Body of pancreas (tissue), 4 donors: ENCODE measurements at regions of chr10 and their contacts with region 1.

Region 1: DNA sequence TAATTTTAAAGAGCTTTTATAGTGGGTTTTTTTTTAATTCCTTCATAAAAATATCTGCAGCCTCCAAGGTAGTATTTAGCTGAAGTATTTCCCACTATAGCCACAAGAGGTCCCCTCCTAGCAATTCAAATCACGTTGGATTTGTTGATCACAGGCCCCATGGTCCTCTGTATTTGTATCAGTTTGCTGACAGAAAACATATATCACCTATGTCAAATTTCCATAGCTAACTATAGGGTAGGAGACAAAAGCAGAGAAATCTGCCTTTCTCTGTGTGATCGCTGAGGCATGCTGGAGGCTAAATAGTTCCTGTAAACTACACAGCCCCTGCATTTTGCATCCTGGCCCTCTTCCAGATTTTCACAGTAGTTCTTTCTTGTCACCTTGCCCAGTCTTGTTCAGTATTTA is 1.7 kb upstream of the CTNNA3 start:
- DNase-seq: peak in 3 of 4 donors; percentile 13 to 32 (median 17)
- ATAC-seq: peak; percentile 70
- H3K4me3 ChIP-seq: no peak overlapping the region
- H3K27ac ChIP-seq: no peak overlapping the region
- H3K4me1 ChIP-seq: peaks cover 5% of the 10 kb centered on the region
- H3K27me3 ChIP-seq: no peaks in the 10 kb centered on the region
- CTCF ChIP-seq: peak; percentile 22 to 71 (median 58)
- POLR2A ChIP-seq: no peak

Region 2: DNA sequence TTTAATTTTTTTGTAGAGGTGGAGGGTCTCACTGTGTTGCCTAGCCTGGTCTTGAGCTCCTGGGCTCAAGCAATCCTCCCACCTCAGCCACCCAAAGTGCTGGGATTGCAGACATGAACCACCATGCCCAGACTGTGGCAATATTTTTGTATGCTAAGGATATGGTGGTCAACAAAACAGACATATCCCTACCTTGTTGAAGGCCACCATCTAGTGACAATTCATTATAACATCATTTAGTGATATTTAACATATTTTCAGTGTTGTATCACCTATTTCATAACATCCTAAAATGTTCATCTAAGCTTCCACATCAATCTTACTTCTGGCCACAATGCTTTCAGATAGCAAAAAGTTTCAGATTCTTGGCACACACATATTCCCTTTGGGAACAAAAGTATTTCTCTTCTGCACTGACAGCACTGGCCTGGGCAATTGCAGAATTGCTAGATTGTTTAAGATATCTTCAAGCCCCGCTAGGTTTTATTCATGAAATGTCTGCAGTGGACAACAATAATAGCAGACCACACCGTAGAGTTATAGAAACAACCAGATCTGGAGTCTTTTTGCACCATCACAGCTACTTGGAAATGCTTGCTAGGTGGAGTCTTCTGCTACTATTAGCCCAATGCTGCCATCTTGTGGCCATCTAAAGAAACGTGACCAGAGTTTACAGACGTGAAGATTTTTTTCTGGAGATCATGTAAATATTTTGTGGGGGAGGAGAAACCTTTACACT is 81.9 kb after region 1 on chr10:
- intact Hi-C with region 1: loop called (anchors 5 kb)
- DNase-seq: peak; percentile 70 to 83 (median 80)
- ATAC-seq: peak; percentile 89
- H3K4me3 ChIP-seq: no peak overlapping the region
- H3K27ac ChIP-seq: no peak overlapping the region
- H3K4me1 ChIP-seq: no peaks in the 10 kb centered on the region
- H3K27me3 ChIP-seq: no peaks in the 10 kb centered on the region
- CTCF ChIP-seq: peak; percentile 67 to 93 (median 89)
- POLR2A ChIP-seq: no peak

Region 3: GRCh38 chr10:67914777-67915340 is 217.1 kb after region 1 on chr10:
- intact Hi-C with region 1: no loop called
- DNase-seq: no peak
- ATAC-seq: no peak
- H3K4me3 ChIP-seq: no peak overlapping the region
- H3K27ac ChIP-seq: no peak overlapping the region
- H3K4me1 ChIP-seq: no peaks in the 10 kb centered on the region
- H3K27me3 ChIP-seq: no peaks in the 10 kb centered on the region
- CTCF ChIP-seq: no peak
- POLR2A ChIP-seq: no peak